Activated CD4-positive, alpha-beta T cell treated with anti-CD3 and anti-CD28 coated beads for 36 hours (primary cell): ENCODE measurements at regions of chr4 and their contacts with region 1.

Region 1: DNA sequence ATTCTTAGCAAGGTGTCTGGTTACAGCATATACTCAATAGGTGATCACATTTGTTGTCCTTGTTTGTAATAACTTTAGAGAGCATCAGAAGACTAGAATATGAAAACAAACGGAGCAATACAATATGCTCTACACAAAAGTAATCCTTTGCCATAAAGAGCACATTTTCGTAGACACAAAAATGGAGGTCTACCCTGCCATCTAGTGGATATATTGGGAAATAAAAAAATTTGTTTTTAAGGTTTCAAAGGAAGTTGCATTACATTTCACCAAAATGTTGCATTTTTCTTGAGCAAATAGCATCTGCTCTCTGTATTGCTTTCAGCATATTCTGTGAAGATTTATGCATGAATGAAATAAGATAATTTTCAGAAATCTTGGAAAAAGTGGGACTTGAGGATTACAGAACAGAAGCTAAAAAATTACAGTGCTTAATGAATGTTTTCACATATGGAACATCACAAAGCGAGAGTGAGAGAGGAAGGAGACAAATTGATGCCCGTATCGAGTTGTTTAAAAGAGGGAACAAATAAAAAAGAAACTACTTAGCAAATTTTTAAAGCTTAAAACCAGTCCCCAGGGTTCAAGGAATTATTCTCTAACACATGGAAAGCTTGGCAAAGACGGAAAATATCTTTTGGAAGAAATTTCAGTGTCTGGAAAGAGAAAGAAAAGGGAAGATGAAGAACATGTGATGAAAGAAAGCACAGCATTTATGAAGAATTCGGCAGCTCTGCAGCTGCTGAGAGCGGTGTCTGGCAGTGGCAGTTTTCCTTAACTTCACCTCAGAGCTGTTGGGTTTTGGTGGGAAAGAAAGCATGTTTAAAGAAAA is 390.1 kb downstream of the ANKRD50 start:
- DNase-seq: no peak
- ATAC-seq: no peak
- H3K4me3 Mint-ChIP-seq: no peak overlapping the region
- H3K27ac Mint-ChIP-seq: no peak overlapping the region
- H3K4me1 Mint-ChIP-seq: no peaks in the 10 kb centered on the region
- H3K27me3 Mint-ChIP-seq: peaks cover 3% of the 10 kb centered on the region

Region 2: DNA sequence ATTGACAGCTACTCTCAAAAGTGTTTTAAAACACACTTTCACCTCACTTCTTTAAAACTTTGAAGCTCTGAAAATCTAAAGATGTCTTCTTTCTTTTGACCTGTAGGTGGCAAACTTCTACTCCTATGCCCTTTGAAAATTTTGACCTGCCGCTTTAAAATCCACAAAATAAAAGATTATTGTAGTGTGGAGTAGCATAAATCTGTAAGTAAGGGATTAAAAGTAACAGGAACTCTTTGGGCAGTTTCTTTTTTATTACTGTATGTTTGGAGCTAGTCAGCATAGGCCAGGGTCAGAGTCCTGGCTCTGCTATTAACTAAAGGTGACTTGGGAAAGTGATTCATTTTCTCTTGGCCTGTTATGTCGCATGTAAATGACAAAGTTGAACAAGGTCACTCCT is 1564.4 kb before region 1 on chr4:
- CTCF ChIA-PET with region 1: interaction called, 3 read pairs
- POLR2A ChIA-PET with region 1: no interaction called
- intact Hi-C with region 1: loop called in 1 of 2 experiments (anchors 10 kb)
- DNase-seq: no peak
- ATAC-seq: peak; percentile 33
- H3K4me3 Mint-ChIP-seq: no peak overlapping the region
- H3K27ac Mint-ChIP-seq: no peak overlapping the region
- H3K4me1 Mint-ChIP-seq: peaks cover 16% of the 10 kb centered on the region
- H3K27me3 Mint-ChIP-seq: peaks cover 12% of the 10 kb centered on the region

Region 3: DNA sequence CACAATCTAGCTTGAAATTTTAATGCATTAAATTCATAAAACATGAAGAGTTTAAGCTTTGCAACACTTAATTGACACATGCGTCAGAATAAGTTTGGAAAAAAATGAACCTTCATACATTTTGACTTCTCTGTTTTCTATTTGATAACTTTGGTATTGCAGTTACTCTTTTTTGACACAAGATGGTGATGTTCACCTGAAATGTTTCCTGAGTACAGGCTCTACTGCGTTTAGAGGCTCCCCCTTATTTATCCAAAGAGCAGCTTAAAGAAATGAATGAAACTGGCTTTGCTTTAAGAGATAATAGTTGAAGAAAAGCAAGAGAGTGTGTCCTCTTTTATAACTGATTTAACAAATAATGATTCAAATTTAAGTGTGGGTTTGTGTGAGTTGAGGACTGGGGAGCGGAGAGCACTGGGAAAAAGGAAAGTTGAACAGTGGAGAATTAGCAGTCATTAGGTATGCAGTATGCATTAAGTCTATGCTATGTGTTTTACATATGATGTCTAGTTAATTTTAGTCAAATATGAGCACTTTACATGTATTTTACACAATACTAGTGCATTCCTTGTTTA is 1219.5 kb before region 1 on chr4:
- CTCF ChIA-PET with region 1: interaction called, 8 read pairs
- POLR2A ChIA-PET with region 1: no interaction called
- intact Hi-C with region 1: loop called (anchors 1 to 5 kb)
- DNase-seq: no peak
- ATAC-seq: peak; percentile 68
- H3K4me3 Mint-ChIP-seq: no peak overlapping the region
- H3K27ac Mint-ChIP-seq: no peak overlapping the region
- H3K4me1 Mint-ChIP-seq: no peaks in the 10 kb centered on the region
- H3K27me3 Mint-ChIP-seq: no peaks in the 10 kb centered on the region

Region 4: DNA sequence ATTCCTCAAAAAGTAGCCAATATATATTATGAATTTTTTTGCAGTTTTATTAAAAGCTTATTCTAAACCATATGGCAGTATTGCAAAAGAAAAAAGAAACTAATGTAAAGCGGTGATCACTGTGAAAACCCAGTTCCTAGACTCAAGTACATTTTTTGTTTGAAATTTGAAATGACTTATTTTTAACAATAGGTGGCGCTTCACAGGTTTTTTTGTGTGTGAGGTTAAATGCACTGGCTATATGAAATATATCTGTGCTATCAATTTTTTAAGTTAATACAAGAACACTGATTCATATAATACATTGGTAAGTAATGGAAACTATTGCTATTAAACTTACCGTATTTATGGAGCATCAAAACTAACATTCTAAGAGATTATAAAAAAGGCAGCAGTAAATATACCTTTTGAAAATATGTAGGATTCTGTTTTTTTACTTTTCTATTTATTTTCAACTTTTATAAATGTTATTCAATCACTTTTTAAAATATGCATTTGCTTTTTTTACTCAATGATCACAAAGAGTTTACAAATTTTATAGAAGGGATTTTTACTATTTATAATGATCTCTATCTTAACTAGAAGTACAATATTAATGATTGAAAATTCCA is 931.5 kb before region 1 on chr4:
- CTCF ChIA-PET with region 1: no interaction called
- POLR2A ChIA-PET with region 1: no interaction called
- intact Hi-C with region 1: loop called in 1 of 2 experiments (anchors 2 kb)
- DNase-seq: no peak
- ATAC-seq: no peak
- H3K4me3 Mint-ChIP-seq: no peak overlapping the region
- H3K27ac Mint-ChIP-seq: no peak overlapping the region
- H3K4me1 Mint-ChIP-seq: peaks cover 8% of the 10 kb centered on the region
- H3K27me3 Mint-ChIP-seq: no peaks in the 10 kb centered on the region

Region 5: DNA sequence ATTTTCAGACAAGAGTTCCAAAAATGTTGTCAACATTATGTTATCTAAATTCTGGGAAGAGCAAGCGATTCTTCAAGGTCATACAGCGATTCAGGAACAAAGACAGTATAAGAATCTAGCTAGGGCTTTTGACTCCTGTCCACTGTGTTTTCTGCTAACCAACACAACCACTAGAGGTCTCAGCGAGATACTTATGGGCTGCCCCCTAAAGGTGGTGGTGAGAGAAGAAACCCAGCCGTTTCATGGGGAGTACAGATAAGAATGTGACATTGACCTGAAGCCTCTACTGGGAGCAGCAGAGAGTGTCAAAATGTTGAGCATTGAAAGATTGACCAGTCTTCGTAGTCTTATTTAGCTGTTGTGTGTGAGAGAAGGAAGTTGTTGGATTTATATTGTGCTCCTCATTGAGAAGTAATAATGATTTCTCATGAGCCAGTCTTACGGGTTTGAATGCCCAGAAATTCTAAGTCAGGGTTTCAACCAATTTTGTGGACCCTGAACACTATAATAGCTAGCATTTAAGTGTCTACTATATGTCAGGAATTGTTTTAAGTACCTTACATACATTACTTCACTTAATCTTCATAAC is 757.6 kb before region 1 on chr4:
- CTCF ChIA-PET with region 1: no interaction called
- POLR2A ChIA-PET with region 1: no interaction called
- intact Hi-C with region 1: loop called in 1 of 2 experiments (anchors 2 kb)
- DNase-seq: peak; percentile 64
- ATAC-seq: peak; percentile 100
- H3K4me3 Mint-ChIP-seq: no peak overlapping the region
- H3K27ac Mint-ChIP-seq: no peak overlapping the region
- H3K4me1 Mint-ChIP-seq: peaks cover 2% of the 10 kb centered on the region
- H3K27me3 Mint-ChIP-seq: peaks cover 9% of the 10 kb centered on the region

Region 6: GRCh38 chr4:123776254-123776653 is 546.2 kb before region 1 on chr4:
- CTCF ChIA-PET with region 1: interaction called, 4 read pairs
- POLR2A ChIA-PET with region 1: no interaction called
- intact Hi-C with region 1: loop called in 1 of 2 experiments (anchors 1 kb)
- DNase-seq: no peak
- ATAC-seq: peak; percentile 64
- H3K4me3 Mint-ChIP-seq: no peak overlapping the region
- H3K27ac Mint-ChIP-seq: no peak overlapping the region
- H3K4me1 Mint-ChIP-seq: peaks cover 7% of the 10 kb centered on the region
- H3K27me3 Mint-ChIP-seq: no peaks in the 10 kb centered on the region

Region 7: DNA sequence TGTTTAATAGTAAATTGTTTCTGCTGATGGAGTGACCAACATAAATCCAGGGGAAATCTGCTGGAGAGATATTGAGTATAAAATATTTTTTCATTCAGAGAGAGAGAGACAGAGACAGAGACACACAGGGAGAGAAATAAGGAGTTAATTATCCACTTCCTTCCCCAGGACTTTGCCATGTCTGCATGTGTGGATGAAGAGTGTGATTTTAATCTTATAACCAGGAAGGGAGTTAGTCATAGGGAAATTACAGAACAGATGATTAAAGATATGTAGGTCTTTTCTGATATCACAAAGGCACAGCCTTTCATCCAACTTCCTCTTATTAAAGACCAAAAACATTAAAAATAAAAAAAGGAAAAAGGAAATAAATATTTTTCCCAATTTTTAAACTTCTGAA is 399.6 kb before region 1 on chr4:
- CTCF ChIA-PET with region 1: no interaction called
- POLR2A ChIA-PET with region 1: no interaction called
- intact Hi-C with region 1: no loop called
- DNase-seq: no peak
- ATAC-seq: no peak
- H3K4me3 Mint-ChIP-seq: no peak overlapping the region
- H3K27ac Mint-ChIP-seq: no peak overlapping the region
- H3K4me1 Mint-ChIP-seq: no peaks in the 10 kb centered on the region
- H3K27me3 Mint-ChIP-seq: peaks cover 3% of the 10 kb centered on the region

Region 8: GRCh38 chr4:124265701-124266100 is 56.7 kb before region 1 on chr4:
- CTCF ChIA-PET with region 1: no interaction called
- POLR2A ChIA-PET with region 1: no interaction called
- intact Hi-C with region 1: no loop called
- DNase-seq: no peak
- ATAC-seq: no peak
- H3K4me3 Mint-ChIP-seq: no peak overlapping the region
- H3K27ac Mint-ChIP-seq: no peak overlapping the region
- H3K4me1 Mint-ChIP-seq: no peaks in the 10 kb centered on the region
- H3K27me3 Mint-ChIP-seq: peaks cover 2% of the 10 kb centered on the region

Region 9: DNA sequence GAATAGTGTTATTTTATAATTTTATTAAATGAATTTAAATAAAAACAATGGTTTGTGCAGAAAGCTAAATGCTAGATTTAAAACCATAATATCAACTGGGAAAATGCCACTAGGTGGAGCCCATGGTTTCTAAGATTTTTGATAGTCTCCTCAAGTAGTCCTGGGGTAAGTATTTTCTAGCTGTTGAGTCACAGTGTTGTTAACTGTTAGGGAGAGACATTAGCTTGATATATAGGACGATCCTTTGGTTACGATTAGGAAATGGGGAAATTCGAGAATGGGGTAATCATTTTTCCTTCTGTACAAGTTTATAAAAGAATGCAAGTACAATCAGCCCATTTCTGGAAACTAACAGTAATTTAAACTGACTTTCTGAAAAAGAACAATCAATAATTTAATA is 11.7 kb after region 1 on chr4:
- CTCF ChIA-PET with region 1: interaction called, 14 read pairs
- POLR2A ChIA-PET with region 1: no interaction called
- intact Hi-C with region 1: no loop called
- DNase-seq: peak; percentile 8
- ATAC-seq: no peak
- H3K4me3 Mint-ChIP-seq: no peak overlapping the region
- H3K27ac Mint-ChIP-seq: no peak overlapping the region
- H3K4me1 Mint-ChIP-seq: no peaks in the 10 kb centered on the region
- H3K27me3 Mint-ChIP-seq: no peaks in the 10 kb centered on the region